HEK293 (cell line): ENCODE measurements at regions of chr9 and their contacts with region 1.

Region 1: GRCh38 chr9:100322954-100323536 is 29.7 kb downstream of the TEX10 start:
- H3K4me3 ChIP-seq: no peak overlapping the region
- H3K27ac ChIP-seq: no peak overlapping the region
- H3K4me1 ChIP-seq: no peaks in the 10 kb centered on the region
- CTCF ChIP-seq: no peak

Region 2: DNA sequence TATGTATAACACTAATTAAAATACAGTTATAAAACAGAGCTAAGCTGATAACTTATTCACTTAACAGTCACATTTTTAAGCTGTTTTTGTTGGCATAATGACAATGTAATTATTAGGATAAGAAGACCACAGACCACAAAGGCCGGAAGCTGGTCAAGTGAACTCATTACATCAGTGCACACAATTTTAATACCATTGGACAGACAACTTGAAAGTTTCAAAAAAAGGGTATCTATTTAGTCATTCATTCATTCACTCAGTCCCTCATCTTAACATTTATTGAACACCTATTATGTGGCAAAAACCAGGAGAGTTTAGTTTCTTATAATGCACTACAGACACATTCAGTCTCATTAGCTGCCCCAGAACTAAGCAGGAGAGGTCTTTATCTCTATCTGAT is 235.8 kb before region 1 on chr9:
- CTCF ChIA-PET with region 1: no interaction called
- POLR2A ChIA-PET with region 1: no interaction called
- H3K4me3 ChIP-seq: no peak overlapping the region
- H3K27ac ChIP-seq: no peak overlapping the region
- H3K4me1 ChIP-seq: peaks cover 24% of the 10 kb centered on the region
- CTCF ChIP-seq: no peak

Region 3: GRCh38 chr9:100341889-100342288 is 18.8 kb after region 1 on chr9:
- CTCF ChIA-PET with region 1: interaction called, 39 read pairs
- POLR2A ChIA-PET with region 1: no interaction called
- H3K4me3 ChIP-seq: no peak overlapping the region
- H3K27ac ChIP-seq: no peak overlapping the region
- H3K4me1 ChIP-seq: no peaks in the 10 kb centered on the region
- CTCF ChIP-seq: no peak

Region 4: GRCh38 chr9:100352727-100353505 is 29.9 kb after region 1 on chr9 and contains the start of gene TEX10:
- CTCF ChIA-PET with region 1: interaction called, 20 read pairs
- POLR2A ChIA-PET with region 1: no interaction called
- H3K4me3 ChIP-seq: peak within 1 kb of the TSS; percentile 69
- H3K27ac ChIP-seq: peak within 1 kb of the TSS; percentile 80
- H3K4me1 ChIP-seq: no peaks in the 10 kb centered on the region
- CTCF ChIP-seq: no peak

Region 5: DNA sequence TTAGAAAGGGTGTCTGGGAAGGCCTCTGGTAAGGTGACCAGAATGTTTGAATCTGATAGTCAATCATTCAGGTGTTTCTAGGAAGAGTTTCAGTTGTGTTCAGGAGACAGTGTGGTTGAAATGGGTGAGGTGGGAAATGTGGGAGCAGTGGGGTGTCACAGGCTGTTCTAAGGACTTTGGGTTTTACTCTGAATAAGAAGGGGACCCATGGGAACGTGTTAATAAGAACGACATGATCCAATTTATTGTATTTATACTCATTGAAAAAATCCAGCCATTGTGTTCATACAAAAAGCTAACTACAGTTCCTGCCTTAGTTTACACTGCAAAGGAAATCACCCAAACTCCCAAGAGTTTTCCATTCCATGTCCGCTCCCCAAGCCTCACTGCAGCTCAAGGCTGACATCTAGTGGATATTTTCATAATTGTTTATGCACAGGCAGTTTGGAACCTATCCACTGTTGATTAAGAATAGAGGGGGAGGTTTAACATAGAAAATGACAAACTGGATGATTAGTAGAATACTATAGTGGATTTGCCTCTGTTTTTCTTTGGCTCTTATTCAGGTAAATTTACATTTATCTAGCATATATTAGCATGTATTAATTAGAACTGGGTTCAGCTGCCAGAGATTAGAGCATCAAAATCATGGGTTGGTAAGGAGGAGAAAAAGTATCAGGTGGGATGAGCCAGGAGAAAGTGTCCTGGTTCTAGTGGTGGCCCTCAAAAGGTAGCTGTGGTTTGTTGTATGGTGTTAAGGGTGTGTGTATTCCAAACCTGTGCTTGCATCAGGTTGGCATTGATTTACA is 272.6 kb after region 1 on chr9:
- CTCF ChIA-PET with region 1: interaction called, 36 read pairs
- POLR2A ChIA-PET with region 1: no interaction called
- H3K4me3 ChIP-seq: no peak overlapping the region
- H3K27ac ChIP-seq: no peak overlapping the region
- H3K4me1 ChIP-seq: no peaks in the 10 kb centered on the region; the same call in 1 of the 2 replicates
- CTCF ChIP-seq: peak; percentile 39